ENCODE measurements at regions of chr2 and their contacts with region 1.

Region 1: GRCh38 chr2:75646583-75647425 is at the start of gene MRPL19:
- DNase-seq: peak; percentile 45 to 81 (median 74)
- ATAC-seq: peak; percentile 98
- H3K4me3 ChIP-seq: peak within 1 kb of the TSS; percentile 92
- H3K4me3 Mint-ChIP-seq: peak within 1 kb of the TSS; percentile 83 to 96 (median 93)
- H3K27ac ChIP-seq: peak within 1 kb of the TSS; percentile 80
- H3K27ac Mint-ChIP-seq: peak within 1 kb of the TSS; percentile 80 to 98 (median 87)
- H3K4me1 ChIP-seq: peaks cover 7 to 17% of the 10 kb centered on the region in 2 donors
- H3K4me1 Mint-ChIP-seq: peaks cover 25 to 51% (median 45%) of the 10 kb centered on the region in 7 donors
- H3K27me3 ChIP-seq: no peaks in the 10 kb centered on the region
- H3K27me3 Mint-ChIP-seq: no peaks in the 10 kb centered on the region
- total RNA-seq, gene MRPL19: 14.2 to 44.8 (median 25.3) TPM

Region 2: GRCh38 chr2:73952499-73953458 is 1694.0 kb before region 1 on chr2:
- CTCF ChIA-PET with region 1: no interaction called
- POLR2A ChIA-PET with region 1: no interaction called
- intact Hi-C with region 1: no loop called
- DNase-seq: no peak
- ATAC-seq: peak; percentile 70
- H3K4me3 ChIP-seq: no peak overlapping the region
- H3K4me3 Mint-ChIP-seq: no peak overlapping the region
- H3K27ac ChIP-seq: no peak overlapping the region
- H3K27ac Mint-ChIP-seq: peak overlapping the region in 8 of 9 donors; percentile 26 to 96 (median 86)
- H3K4me1 ChIP-seq: peaks cover 0 to 38% of the 10 kb centered on the region in 2 donors
- H3K4me1 Mint-ChIP-seq: peaks cover 51 to 80% (median 73%) of the 10 kb centered on the region in 7 donors
- H3K27me3 ChIP-seq: no peaks in the 10 kb centered on the region
- H3K27me3 Mint-ChIP-seq: no peaks in the 10 kb centered on the region

Region 3: GRCh38 chr2:74845217-74846011 is 801.4 kb before region 1 on chr2:
- CTCF ChIA-PET with region 1: no interaction called
- POLR2A ChIA-PET with region 1: no interaction called
- intact Hi-C with region 1: loop called in 1 of 2 experiments (anchors 5 kb)
- DNase-seq: peak in 2 of 9 donors; percentile 23 to 51
- ATAC-seq: peak; percentile 70
- H3K4me3 ChIP-seq: peak overlapping the region; percentile 29
- H3K4me3 Mint-ChIP-seq: peak overlapping the region; percentile 65 to 87 (median 78)
- H3K27ac ChIP-seq: peak overlapping the region; percentile 39
- H3K27ac Mint-ChIP-seq: peak overlapping the region; percentile 85 to 99 (median 94)
- H3K4me1 ChIP-seq: peaks cover 37 to 97% of the 10 kb centered on the region in 2 donors
- H3K4me1 Mint-ChIP-seq: peaks cover 75 to 100% (median 97%) of the 10 kb centered on the region in 7 donors
- H3K27me3 ChIP-seq: no peaks in the 10 kb centered on the region
- H3K27me3 Mint-ChIP-seq: no peaks in the 10 kb centered on the region

Region 4: GRCh38 chr2:75710577-75711253 is 63.9 kb after region 1 on chr2 and contains the start of gene GCFC2:
- CTCF ChIA-PET with region 1: interaction called, 6 read pairs
- POLR2A ChIA-PET with region 1: interaction called, 12 read pairs
- intact Hi-C with region 1: loop called (anchors 1 kb)
- DNase-seq: peak; percentile 70 to 91 (median 83)
- ATAC-seq: peak; percentile 91
- H3K4me3 ChIP-seq: peak within 1 kb of the TSS; percentile 78
- H3K4me3 Mint-ChIP-seq: peak within 1 kb of the TSS; percentile 72 to 98 (median 95)
- H3K27ac ChIP-seq: peak within 1 kb of the TSS; percentile 79
- H3K27ac Mint-ChIP-seq: peak within 1 kb of the TSS; percentile 96 to 98 (median 98)
- H3K4me1 ChIP-seq: peaks cover 0 to 13% of the 10 kb centered on the region in 2 donors
- H3K4me1 Mint-ChIP-seq: peaks cover 10 to 50% (median 33%) of the 10 kb centered on the region in 7 donors
- H3K27me3 ChIP-seq: no peaks in the 10 kb centered on the region
- H3K27me3 Mint-ChIP-seq: peaks cover 0 to 10% (median 4%) of the 10 kb centered on the region in 5 donors
- total RNA-seq, gene GCFC2: 15.8 to 29.1 (median 23.5) TPM

Measured in naive thymus-derived CD4-positive, alpha-beta T cell (primary cell).